Activated CD8-positive, alpha-beta T cell treated with anti-CD3 and anti-CD28 coated beads for 36 hours (primary cell): ENCODE measurements at regions of chr2 and their contacts with region 1.

Region 1: DNA sequence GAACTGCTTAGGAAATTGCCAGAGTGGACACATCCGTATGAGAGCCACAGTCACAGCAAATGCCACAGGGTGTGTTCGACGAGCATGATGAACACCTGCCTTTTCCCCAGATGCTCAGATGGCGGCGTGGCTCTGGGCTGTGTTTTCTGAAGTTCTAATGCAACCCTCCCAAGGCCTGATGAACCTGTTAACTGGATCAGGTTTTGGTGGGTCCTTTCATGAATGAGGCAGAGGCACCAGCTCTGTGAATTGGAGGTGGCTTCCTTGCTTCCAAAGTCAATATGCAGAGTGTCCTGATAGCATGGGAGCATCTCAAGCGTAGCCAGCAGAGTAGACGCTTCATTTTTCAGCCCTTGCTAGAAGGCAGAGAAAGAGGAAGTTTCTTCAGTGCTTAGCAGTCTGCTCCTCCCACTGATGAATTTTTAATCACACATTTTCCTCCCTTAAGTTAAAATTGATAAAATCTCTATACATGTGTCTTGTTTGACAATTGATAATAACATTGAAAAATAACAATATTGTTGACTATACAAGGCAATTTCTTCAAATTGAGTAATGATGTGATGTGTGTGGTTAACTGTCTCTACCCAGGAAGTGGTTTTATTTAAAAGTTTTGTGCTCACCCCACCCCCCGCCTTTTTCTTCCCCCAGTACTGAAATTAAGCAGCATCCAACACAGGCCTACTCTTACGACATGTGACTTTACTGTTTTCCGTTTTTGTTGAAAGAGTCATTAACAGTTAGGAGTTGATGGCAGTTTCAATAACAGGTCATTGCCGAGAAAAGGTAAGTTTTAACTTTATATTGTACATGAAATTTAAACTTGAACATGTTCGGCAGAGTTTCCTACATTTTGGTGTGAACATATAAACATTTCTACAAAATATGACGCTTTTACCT is at the start of gene ARHGAP15:
- DNase-seq: peak; percentile 91
- ATAC-seq: peak; percentile 77
- H3K4me3 Mint-ChIP-seq: peak within 1 kb of the TSS; percentile 81
- H3K27ac Mint-ChIP-seq: peak within 1 kb of the TSS; percentile 100
- H3K4me1 Mint-ChIP-seq: peaks cover 39% of the 10 kb centered on the region
- H3K27me3 Mint-ChIP-seq: no peaks in the 10 kb centered on the region
- CTCF ChIP-seq: no peak
- total RNA-seq, gene ARHGAP15: 71.3 to 72.8 TPM

Region 2: DNA sequence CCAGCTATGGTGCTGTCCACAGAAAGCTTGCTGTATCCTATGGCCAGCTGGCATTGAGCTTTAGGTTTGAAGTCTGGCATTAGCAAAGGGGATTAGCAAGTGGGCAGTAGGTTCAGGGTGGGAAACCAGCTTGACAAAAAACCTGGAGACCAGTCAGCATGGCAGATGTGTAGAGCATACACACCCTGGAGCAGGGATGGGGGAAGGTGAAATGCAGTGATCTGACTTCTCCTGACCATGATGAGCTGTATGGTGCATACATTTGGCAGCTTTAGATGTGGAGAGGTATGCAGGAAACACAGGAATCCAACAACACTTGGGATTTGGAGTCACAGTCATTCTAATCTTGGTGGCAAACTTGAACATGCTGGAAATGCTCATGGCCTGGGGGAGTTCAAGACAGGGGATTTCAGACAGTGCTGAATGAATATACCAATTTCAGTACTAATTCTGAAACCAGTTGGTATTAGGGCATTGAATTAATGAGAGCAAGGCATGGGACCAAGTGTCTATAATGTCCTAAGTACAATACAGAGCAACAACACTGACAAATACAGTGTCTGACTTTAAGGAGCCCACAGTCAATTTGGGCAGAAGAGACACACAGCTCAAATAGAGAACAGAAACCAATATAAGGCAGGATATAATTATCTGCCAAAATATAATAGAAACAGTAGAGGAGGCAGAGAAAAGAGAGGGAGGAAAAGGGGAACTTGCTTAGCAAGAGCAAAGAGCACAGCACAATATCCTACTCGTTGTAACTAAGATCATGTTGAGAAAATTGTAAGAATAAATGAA is 12.1 kb after region 1 on chr2:
- CTCF ChIA-PET with region 1: interaction called, 8 read pairs
- POLR2A ChIA-PET with region 1: interaction called, 12 read pairs
- intact Hi-C with region 1: no loop called
- DNase-seq: no peak
- ATAC-seq: peak; percentile 54
- H3K4me3 Mint-ChIP-seq: peak overlapping the region; percentile 71
- H3K27ac Mint-ChIP-seq: peak overlapping the region; percentile 92
- H3K4me1 Mint-ChIP-seq: peaks cover 83% of the 10 kb centered on the region
- H3K27me3 Mint-ChIP-seq: no peaks in the 10 kb centered on the region
- CTCF ChIP-seq: no peak

Region 3: GRCh38 chr2:143150287-143150686 is 21.4 kb after region 1 on chr2:
- CTCF ChIA-PET with region 1: interaction called, 4 read pairs
- POLR2A ChIA-PET with region 1: interaction called, 11 read pairs
- intact Hi-C with region 1: no loop called
- DNase-seq: no peak
- ATAC-seq: no peak
- H3K4me3 Mint-ChIP-seq: peak overlapping the region; percentile 58
- H3K27ac Mint-ChIP-seq: peak overlapping the region; percentile 86
- H3K4me1 Mint-ChIP-seq: peaks cover 80% of the 10 kb centered on the region
- H3K27me3 Mint-ChIP-seq: no peaks in the 10 kb centered on the region
- CTCF ChIP-seq: no peak

Region 4: GRCh38 chr2:143209570-143210445 is 80.9 kb after region 1 on chr2:
- CTCF ChIA-PET with region 1: no interaction called
- POLR2A ChIA-PET with region 1: no interaction called
- intact Hi-C with region 1: no loop called
- DNase-seq: no peak
- ATAC-seq: no peak
- H3K4me3 Mint-ChIP-seq: no peak overlapping the region
- H3K27ac Mint-ChIP-seq: no peak overlapping the region
- H3K4me1 Mint-ChIP-seq: peaks cover 35% of the 10 kb centered on the region
- H3K27me3 Mint-ChIP-seq: no peaks in the 10 kb centered on the region
- CTCF ChIP-seq: no peak